ENCODE measurements at regions of chr5 and their contacts with region 1.

Region 1: DNA sequence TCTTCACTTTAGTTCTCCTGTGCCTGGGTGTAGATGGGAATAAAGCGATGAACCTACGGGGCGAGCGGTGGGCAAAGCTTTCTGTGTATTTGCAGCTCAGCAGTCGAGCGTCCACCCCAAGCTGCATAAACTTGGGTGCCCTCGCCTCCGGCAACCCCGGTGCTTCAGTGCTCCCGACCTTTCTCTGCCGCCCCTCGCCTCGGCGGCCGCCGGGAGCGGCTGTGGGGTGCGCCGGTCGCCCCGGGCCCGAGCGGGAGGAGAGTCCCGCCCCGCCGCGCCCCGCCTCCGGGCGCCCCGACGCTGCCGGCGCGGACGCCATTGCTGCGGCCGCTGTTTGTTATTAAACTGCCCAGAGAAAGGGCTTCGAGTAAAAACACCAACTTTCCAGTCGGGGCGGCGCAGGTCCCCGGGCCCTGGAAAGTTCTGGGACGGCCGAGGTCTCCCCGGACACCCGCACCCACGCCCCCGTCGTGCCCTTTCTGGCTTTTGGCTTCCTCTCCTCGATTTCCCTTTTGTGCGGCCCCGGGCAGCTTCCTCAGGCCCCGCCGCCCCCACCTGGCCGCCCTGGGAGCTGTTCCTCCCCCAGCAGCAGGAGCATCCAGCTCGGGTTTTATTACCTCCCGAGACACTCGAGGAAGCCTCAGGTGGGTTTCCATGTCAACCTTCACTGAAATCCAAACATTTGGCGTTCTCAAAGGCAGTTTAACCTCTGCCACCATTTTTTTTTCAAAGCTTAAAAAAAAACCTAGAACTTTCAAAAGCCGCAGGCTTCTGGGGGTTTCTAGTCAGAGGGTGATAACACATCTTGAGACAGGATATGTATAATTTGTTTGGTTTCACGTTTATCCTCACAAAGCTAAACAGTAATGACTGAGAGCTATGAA is 334.3 kb downstream of the CWC27 start:
- DNase-seq: peak; percentile 74
- H3K4me3 ChIP-seq: peak overlapping the region; percentile 13 to 57 (median 43)
- H3K27ac ChIP-seq: peak overlapping the region; percentile 63
- H3K4me1 ChIP-seq: peaks cover 13% of the 10 kb centered on the region
- H3K27me3 ChIP-seq: no peaks in the 10 kb centered on the region
- CTCF ChIP-seq: peak in 1 of 2 donors; percentile 36
- POLR2A ChIP-seq: peak; percentile 34

Region 2: GRCh38 chr5:64958757-64959391 is 144.2 kb before region 1 on chr5:
- CTCF ChIA-PET with region 1: interaction called, 6 read pairs
- POLR2A ChIA-PET with region 1: no interaction called
- dilution Hi-C with region 1: no loop called
- intact Hi-C with region 1: loop called (anchors 1 kb)
- DNase-seq: peak; percentile 43
- H3K4me3 ChIP-seq: no peak overlapping the region
- H3K27ac ChIP-seq: no peak overlapping the region
- H3K4me1 ChIP-seq: no peaks in the 10 kb centered on the region
- H3K27me3 ChIP-seq: no peaks in the 10 kb centered on the region
- CTCF ChIP-seq: peak; percentile 27 to 39
- POLR2A ChIP-seq: no peak

Region 3: DNA sequence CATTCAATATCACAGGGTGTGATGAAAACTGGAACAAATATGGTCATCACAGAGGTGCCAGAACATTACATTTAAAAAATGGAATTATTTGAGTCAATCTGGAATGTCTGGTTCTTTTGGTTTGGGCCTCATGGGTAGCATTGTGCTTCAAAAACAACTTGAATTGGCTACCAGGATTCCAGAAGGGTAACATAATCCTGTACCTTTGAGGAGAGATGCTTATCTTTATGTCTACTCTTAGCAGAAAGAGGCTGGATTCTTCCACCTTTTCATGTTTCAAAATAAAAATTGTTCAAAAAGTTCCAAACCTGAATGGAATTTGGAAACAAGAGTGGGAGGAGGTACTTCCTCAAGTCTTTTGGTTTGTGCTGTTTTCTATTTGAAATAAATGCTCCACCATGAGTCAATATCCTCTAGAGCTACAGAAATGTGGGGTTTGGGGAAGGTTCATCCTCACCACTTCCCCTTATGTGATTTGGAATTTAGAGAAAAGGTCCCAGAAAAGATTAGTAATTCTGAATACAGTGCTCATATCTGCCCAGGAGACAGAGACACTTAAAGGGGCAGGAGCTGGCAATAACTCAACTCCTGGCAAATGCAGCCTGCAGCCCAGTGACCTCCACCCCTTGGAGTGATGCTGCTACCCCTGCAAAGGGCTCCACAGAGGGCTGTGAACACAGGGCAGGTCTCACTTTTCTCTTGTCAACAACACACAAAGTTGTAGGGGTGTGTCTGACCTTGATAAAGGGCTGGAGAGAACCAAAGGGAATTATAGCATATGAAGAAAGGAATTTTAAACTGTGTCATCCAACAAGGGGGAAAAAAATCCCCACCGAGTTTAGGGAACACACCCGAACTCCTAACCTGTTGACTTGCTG is 61.5 kb before region 1 on chr5:
- CTCF ChIA-PET with region 1: no interaction called
- POLR2A ChIA-PET with region 1: no interaction called
- dilution Hi-C with region 1: no loop called
- intact Hi-C with region 1: no loop called
- DNase-seq: peak; percentile 40
- H3K4me3 ChIP-seq: no peak overlapping the region
- H3K27ac ChIP-seq: no peak overlapping the region
- H3K4me1 ChIP-seq: peaks cover 23% of the 10 kb centered on the region
- H3K27me3 ChIP-seq: no peaks in the 10 kb centered on the region
- CTCF ChIP-seq: no peak
- POLR2A ChIP-seq: no peak

Region 4: DNA sequence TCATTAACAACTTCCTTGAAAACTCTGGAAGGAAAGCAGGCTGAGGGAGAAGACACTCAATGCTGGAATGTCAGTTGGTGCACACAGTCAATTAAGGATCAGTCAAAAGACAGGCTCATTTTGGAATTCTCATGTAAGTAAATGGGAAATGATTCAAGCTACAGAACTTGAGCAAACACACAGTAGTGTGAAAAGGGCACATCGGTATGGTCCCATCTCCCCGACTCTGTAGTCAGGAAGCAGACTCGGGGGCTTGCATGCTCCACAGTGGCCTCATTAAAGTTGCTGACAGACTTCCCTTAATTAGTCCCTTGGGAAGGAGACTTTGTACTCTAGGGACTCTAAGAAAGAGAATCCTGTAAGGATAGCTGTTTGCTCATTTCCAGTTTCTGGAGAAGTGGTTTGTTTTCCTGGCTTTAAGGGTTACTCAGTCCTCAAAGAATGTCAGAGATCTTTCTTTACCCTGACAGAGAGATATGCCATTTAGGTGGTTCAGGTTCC is 39.5 kb after region 1 on chr5:
- CTCF ChIA-PET with region 1: interaction called, 3 read pairs
- POLR2A ChIA-PET with region 1: no interaction called
- dilution Hi-C with region 1: no loop called
- intact Hi-C with region 1: loop called (anchors 2 kb)
- DNase-seq: peak; percentile 68
- H3K4me3 ChIP-seq: peak overlapping the region in 1 of 3 experiments; percentile 34
- H3K27ac ChIP-seq: peak overlapping the region; percentile 80
- H3K4me1 ChIP-seq: peaks cover 41% of the 10 kb centered on the region
- H3K27me3 ChIP-seq: no peaks in the 10 kb centered on the region
- CTCF ChIP-seq: no peak
- POLR2A ChIP-seq: no peak

Measured in endothelial cell of umbilical vein (primary cell).